ENCODE measurements at regions of chr13 and their contacts with region 1.

Region 1: DNA sequence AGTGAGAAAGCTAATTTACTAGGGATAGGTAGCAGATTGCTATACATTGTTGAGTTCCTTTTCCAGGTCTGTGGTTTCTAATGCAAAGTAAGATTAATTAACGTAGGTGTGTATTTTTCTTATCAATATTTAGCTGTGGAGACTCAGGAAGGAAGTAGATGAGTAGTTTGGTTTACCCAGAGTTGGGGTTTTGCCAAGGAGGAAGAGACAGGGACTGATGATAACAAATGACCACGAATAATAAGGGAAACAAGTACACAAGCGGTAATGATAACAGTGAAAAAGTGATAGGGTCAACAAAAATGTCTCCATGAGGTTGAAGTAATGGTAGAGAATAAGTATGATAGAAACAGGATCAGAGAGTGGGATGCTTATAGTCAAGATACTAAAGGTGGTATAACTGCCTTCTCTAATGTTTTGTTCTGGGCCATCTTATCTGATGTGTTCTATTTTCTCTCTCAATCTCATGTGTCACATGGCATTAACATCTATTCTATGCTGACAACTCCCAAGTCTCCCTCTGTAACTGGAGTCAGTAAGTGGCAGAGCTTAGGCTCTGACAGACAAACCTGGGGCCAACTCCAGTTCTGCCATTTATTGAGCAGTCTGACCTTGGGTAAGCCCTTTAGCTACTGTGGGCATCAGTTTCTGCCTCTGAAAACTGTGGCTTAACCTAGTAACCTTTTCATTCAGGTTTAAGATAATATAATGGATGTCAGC is 8.8 kb downstream of the OBI1 start:
- DNase-seq: no peak
- ATAC-seq: peak in 1 of 4 donors; percentile 39
- H3K4me3 ChIP-seq: no peak overlapping the region
- H3K27ac ChIP-seq: no peak overlapping the region
- H3K4me1 ChIP-seq: peaks cover 0 to 58% (median 30%) of the 10 kb centered on the region in 12 donors
- H3K27me3 ChIP-seq: no peaks in the 10 kb centered on the region
- CTCF ChIP-seq: no peak
- POLR2A ChIP-seq: no peak

Region 2: GRCh38 chr13:77994166-77994565 is 656.0 kb before region 1 on chr13:
- intact Hi-C with region 1: no loop called
- DNase-seq: no peak
- ATAC-seq: no peak
- H3K4me3 ChIP-seq: no peak overlapping the region
- H3K27ac ChIP-seq: no peak overlapping the region
- H3K4me1 ChIP-seq: peaks cover 0 to 31% (median 6%) of the 10 kb centered on the region in 12 donors
- H3K27me3 ChIP-seq: no peaks in the 10 kb centered on the region
- CTCF ChIP-seq: no peak
- POLR2A ChIP-seq: no peak

Region 3: GRCh38 chr13:78609464-78610205 is 40.5 kb before region 1 on chr13:
- intact Hi-C with region 1: loop called in 6 of 10 experiments (anchors 5 to 10 kb)
- DNase-seq: no peak
- ATAC-seq: peak in 3 of 4 donors; percentile 56 to 60 (median 56)
- H3K4me3 ChIP-seq: peak overlapping the region; percentile 26 to 61 (median 53)
- H3K27ac ChIP-seq: no peak overlapping the region
- H3K4me1 ChIP-seq: peaks cover 0 to 36% (median 20%) of the 10 kb centered on the region in 12 donors
- H3K27me3 ChIP-seq: peaks cover 49 to 79% (median 58%) of the 10 kb centered on the region in 9 donors
- CTCF ChIP-seq: no peak
- POLR2A ChIP-seq: no peak

Region 4: GRCh38 chr13:78700121-78700910 is 50.2 kb after region 1 on chr13:
- intact Hi-C with region 1: no loop called
- DNase-seq: no peak
- ATAC-seq: no peak
- H3K4me3 ChIP-seq: no peak overlapping the region
- H3K27ac ChIP-seq: no peak overlapping the region
- H3K4me1 ChIP-seq: peaks cover 0 to 5% (median 0%) of the 10 kb centered on the region in 12 donors
- H3K27me3 ChIP-seq: no peaks in the 10 kb centered on the region
- CTCF ChIP-seq: no peak
- POLR2A ChIP-seq: no peak